ENCODE measurements at regions of chr2 and their contacts with region 1.

Region 1: DNA sequence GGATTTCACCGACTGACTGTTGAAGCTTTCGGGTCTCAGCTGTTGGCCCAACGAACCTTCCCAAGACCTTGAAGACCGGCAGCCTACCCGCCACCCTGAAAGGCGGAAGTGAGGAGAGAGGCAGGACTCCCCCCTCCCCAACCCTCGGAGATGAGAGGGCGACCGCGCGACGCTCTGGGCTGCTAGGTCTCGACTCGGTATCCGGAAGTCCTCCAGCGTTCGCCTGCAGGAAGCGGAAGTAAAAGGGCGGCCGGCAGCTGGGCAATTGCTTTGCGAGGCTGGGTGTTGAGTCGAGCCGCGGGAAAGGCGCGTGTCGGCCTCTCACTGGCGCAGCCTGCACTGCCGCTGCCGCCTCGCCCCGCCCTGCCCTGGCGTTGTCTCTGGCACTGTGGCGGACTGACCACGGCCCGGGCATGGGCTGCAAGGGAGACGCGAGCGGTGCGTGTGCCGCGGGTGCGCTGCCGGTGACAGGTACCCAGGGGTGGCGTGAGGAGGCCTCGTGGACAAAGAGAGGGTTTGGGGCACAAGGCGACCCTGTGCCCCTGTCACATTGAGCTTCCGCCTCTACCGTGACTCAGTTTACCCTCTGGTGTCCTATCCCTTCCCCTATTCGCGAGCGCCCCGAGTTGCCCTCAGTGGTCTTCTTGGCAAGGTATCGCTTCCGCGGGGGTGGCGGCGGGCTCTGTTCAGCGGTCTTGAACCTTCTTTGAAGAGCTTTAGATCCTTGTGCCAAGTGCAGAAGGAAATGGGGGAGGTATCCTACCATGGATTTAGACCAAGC is at the start of gene UGGT1:
- DNase-seq: peak; percentile 96
- ATAC-seq: peak; percentile 98
- H3K4me3 ChIP-seq: peak within 1 kb of the TSS; percentile 92
- H3K27ac ChIP-seq: peak within 1 kb of the TSS; percentile 94
- H3K4me1 ChIP-seq: no peaks in the 10 kb centered on the region
- H3K27me3 ChIP-seq: no peaks in the 10 kb centered on the region
- CTCF ChIP-seq: no peak
- POLR2A ChIP-seq: peak; percentile 97
- RAD21 ChIP-seq: no peak
- total RNA-seq, gene UGGT1: 71.3 and 100.0 TPM in 2 replicates

Region 2: DNA sequence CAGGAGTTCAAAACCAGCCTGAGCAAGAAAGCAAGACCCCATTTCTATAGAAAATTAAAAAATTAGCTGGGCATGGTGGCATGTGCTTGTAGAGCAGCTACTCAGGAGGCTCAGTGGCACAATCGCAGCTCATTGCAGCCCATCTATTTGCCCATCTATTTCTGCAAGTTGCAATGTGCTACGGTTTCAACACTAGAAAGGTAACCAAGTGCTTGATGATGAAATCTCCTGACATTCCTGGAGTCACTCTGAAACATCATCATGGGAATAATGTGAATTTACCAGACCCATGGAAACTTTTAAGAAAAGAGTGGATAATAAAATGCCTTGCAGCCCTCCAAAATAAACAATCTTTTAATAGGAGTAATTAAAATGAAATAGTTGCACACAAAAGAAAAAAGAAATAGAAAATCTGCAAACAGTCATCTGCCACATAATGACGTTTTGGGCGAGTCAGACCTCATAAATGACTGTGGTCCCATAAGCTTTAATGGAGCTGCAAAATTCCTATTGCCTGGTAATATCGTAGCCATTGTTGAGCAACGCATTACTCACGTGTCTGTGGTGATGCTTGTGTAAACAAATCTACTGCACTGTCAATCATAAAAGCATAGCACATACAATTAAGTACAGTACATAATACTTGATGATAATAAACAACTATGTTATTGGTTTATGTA is 158.8 kb before region 1 on chr2:
- CTCF ChIA-PET with region 1: no interaction called
- POLR2A ChIA-PET with region 1: no interaction called
- dilution Hi-C with region 1: no loop called
- in situ Hi-C with region 1: no loop called
- intact Hi-C with region 1: no loop called
- DNase-seq: peak; percentile 84
- ATAC-seq: peak; percentile 59; the same call in 1 of the 2 replicates
- H3K4me3 ChIP-seq: no peak overlapping the region
- H3K27ac ChIP-seq: no peak overlapping the region
- H3K4me1 ChIP-seq: 0 out of 2 replicates have a peak, but pooled peaks cover 2% of the 10 kb centered on the region
- H3K27me3 ChIP-seq: no peaks in the 10 kb centered on the region
- CTCF ChIP-seq: no peak
- POLR2A ChIP-seq: no peak
- RAD21 ChIP-seq: no peak

Region 3: GRCh38 chr2:128027801-128028667 is 63.1 kb before region 1 on chr2 and contains the start of gene SAP130:
- CTCF ChIA-PET with region 1: no interaction called
- POLR2A ChIA-PET with region 1: no interaction called
- dilution Hi-C with region 1: no loop called
- in situ Hi-C with region 1: no loop called
- intact Hi-C with region 1: loop called (anchors 1 kb)
- DNase-seq: peak; percentile 89
- ATAC-seq: peak; percentile 87
- H3K4me3 ChIP-seq: peak within 1 kb of the TSS; percentile 85
- H3K27ac ChIP-seq: peak within 1 kb of the TSS; percentile 88
- H3K4me1 ChIP-seq: peaks cover 2% of the 10 kb centered on the region; the same call in 1 of the 2 replicates
- H3K27me3 ChIP-seq: no peaks in the 10 kb centered on the region
- CTCF ChIP-seq: no peak
- POLR2A ChIP-seq: peak; percentile 57; the same call in 1 of the 2 replicates
- RAD21 ChIP-seq: no peak
- total RNA-seq, gene SAP130: 5.0 and 6.1 TPM in 2 replicates

Region 4: DNA sequence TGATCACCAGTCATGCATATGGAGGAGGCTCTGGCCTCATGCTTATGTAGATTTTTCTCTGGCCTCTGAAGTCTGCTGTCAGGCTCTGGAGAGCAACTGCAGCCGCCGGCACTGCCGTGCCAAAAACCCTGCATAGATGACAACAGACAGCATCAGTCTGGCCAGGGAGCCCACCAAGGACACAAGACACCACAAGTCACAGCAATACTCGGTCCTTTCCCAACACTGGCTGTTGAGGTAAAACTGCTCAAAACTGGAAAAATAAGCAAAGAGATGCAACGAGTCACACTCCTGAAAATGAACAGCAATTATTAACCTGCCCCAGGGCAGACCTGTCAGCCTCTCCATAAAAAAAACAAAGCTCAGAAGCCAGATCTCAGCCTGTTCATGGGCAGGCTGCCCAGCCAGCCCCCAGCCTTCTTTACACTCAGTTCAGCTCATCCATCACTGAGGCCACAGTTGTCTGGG is 1702.3 kb after region 1 on chr2:
- CTCF ChIA-PET with region 1: no interaction called
- POLR2A ChIA-PET with region 1: no interaction called
- dilution Hi-C with region 1: no loop called
- in situ Hi-C with region 1: no loop called
- intact Hi-C with region 1: no loop called
- DNase-seq: no peak
- ATAC-seq: no peak
- H3K4me3 ChIP-seq: no peak overlapping the region
- H3K27ac ChIP-seq: no peak overlapping the region
- H3K4me1 ChIP-seq: no peaks in the 10 kb centered on the region
- H3K27me3 ChIP-seq: no peaks in the 10 kb centered on the region
- CTCF ChIP-seq: no peak
- POLR2A ChIP-seq: no peak
- RAD21 ChIP-seq: no peak